ENCODE measurements at regions of chr5 and their contacts with region 1.

Region 1: DNA sequence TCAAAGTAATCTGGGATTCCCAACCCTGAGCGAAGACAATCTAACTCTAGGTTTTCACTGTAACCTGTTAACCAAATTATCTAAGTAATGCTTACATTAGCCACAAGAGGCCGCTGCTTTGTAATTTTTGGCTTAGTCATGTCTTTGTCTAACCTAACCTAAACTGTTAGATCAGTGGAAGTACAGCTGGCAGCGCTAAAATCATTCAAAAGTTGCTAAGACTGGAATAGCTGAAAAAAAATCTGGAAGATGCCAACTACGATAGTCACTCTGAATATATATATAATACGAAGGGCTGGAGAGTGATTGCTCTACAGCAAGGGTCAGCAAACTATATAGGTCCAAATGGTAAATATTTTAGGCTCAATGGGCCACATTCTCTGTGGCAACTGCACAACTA is 60.2 kb downstream of the FBXO38 start:
- DNase-seq: peak; percentile 3
- ATAC-seq: peak; percentile 96
- H3K4me3 ChIP-seq: no peak overlapping the region
- H3K27ac ChIP-seq: no peak overlapping the region
- H3K4me1 ChIP-seq: no peaks in the 10 kb centered on the region
- H3K27me3 ChIP-seq: no peaks in the 10 kb centered on the region
- CTCF ChIP-seq: peak; percentile 63 to 73 (median 69)
- EP300 ChIP-seq: no peak
- POLR2A ChIP-seq: no peak
- RAD21 ChIP-seq: peak; percentile 78

Region 2: GRCh38 chr5:148374692-148375360 is 69.2 kb before region 1 on chr5:
- CTCF ChIA-PET with region 1: no interaction called
- POLR2A ChIA-PET with region 1: no interaction called
- RAD21 ChIA-PET with region 1: no interaction called
- SMC1A ChIA-PET with region 1: no interaction called
- in situ Hi-C with region 1: no loop called
- intact Hi-C with region 1: no loop called
- DNase-seq: no peak
- ATAC-seq: peak; percentile 90
- H3K4me3 ChIP-seq: no peak overlapping the region
- H3K27ac ChIP-seq: no peak overlapping the region
- H3K4me1 ChIP-seq: no peaks in the 10 kb centered on the region
- H3K27me3 ChIP-seq: no peaks in the 10 kb centered on the region
- CTCF ChIP-seq: peak; percentile 68 to 76 (median 75)
- EP300 ChIP-seq: no peak
- POLR2A ChIP-seq: no peak
- RAD21 ChIP-seq: peak; percentile 74

Region 3: DNA sequence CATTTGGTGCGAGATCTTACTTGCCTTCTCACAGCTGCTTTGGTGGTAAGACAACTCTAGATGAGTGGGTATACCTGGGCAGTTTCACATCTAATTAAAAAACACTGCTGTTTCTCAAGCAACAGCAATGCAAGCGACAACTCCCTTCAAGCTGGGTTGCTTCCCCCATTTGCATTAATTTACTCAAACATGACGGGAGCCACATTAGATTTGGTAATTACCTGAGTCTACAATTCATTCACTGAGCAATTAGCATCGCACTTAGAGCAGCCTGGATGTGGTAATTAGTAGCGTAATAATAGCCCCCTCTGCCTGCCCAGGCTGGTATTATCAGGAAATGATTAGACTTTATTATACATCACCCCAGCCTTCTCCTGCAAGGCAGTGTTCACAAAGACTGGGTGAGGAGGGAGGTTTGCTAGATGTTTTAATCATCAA is 13.2 kb after region 1 on chr5:
- CTCF ChIA-PET with region 1: interaction called, 10 read pairs
- POLR2A ChIA-PET with region 1: no interaction called
- RAD21 ChIA-PET with region 1: no interaction called
- SMC1A ChIA-PET with region 1: interaction called, 4 read pairs
- in situ Hi-C with region 1: no loop called
- intact Hi-C with region 1: no loop called
- DNase-seq: no peak
- ATAC-seq: peak; percentile 91
- H3K4me3 ChIP-seq: no peak overlapping the region
- H3K27ac ChIP-seq: no peak overlapping the region
- H3K4me1 ChIP-seq: no peaks in the 10 kb centered on the region
- H3K27me3 ChIP-seq: no peaks in the 10 kb centered on the region
- CTCF ChIP-seq: peak; percentile 29 to 42 (median 33); a peak in 3 of 6 replicates
- EP300 ChIP-seq: no peak
- POLR2A ChIP-seq: no peak
- RAD21 ChIP-seq: 0 out of 2 replicates have a peak, but pooled peaks have one; percentile 10

Region 4: GRCh38 chr5:148687427-148687826 is 243.4 kb after region 1 on chr5:
- CTCF ChIA-PET with region 1: interaction called, 4 read pairs
- POLR2A ChIA-PET with region 1: no interaction called
- RAD21 ChIA-PET with region 1: no interaction called
- SMC1A ChIA-PET with region 1: no interaction called
- in situ Hi-C with region 1: no loop called
- intact Hi-C with region 1: loop called (anchors 2 kb)
- DNase-seq: no peak
- ATAC-seq: peak; percentile 99
- H3K4me3 ChIP-seq: no peak overlapping the region
- H3K27ac ChIP-seq: no peak overlapping the region
- H3K4me1 ChIP-seq: no peaks in the 10 kb centered on the region
- H3K27me3 ChIP-seq: no peaks in the 10 kb centered on the region
- CTCF ChIP-seq: peak; percentile 37 to 70 (median 51)
- EP300 ChIP-seq: no peak
- POLR2A ChIP-seq: no peak
- RAD21 ChIP-seq: peak; percentile 41

Region 5: GRCh38 chr5:149114403-149115312 is 670.7 kb after region 1 on chr5:
- CTCF ChIA-PET with region 1: no interaction called
- POLR2A ChIA-PET with region 1: no interaction called
- RAD21 ChIA-PET with region 1: no interaction called
- SMC1A ChIA-PET with region 1: interaction called, 3 read pairs
- in situ Hi-C with region 1: no loop called
- intact Hi-C with region 1: loop called (anchors 5 kb)
- DNase-seq: no peak
- ATAC-seq: peak; percentile 97
- H3K4me3 ChIP-seq: no peak overlapping the region
- H3K27ac ChIP-seq: no peak overlapping the region
- H3K4me1 ChIP-seq: no peaks in the 10 kb centered on the region
- H3K27me3 ChIP-seq: no peaks in the 10 kb centered on the region
- CTCF ChIP-seq: peak; percentile 66 to 74 (median 73)
- EP300 ChIP-seq: no peak
- POLR2A ChIP-seq: no peak
- RAD21 ChIP-seq: peak; percentile 69